HepG2 (cell line): ENCODE measurements at regions of chr3 and their contacts with region 1.

Region 1: DNA sequence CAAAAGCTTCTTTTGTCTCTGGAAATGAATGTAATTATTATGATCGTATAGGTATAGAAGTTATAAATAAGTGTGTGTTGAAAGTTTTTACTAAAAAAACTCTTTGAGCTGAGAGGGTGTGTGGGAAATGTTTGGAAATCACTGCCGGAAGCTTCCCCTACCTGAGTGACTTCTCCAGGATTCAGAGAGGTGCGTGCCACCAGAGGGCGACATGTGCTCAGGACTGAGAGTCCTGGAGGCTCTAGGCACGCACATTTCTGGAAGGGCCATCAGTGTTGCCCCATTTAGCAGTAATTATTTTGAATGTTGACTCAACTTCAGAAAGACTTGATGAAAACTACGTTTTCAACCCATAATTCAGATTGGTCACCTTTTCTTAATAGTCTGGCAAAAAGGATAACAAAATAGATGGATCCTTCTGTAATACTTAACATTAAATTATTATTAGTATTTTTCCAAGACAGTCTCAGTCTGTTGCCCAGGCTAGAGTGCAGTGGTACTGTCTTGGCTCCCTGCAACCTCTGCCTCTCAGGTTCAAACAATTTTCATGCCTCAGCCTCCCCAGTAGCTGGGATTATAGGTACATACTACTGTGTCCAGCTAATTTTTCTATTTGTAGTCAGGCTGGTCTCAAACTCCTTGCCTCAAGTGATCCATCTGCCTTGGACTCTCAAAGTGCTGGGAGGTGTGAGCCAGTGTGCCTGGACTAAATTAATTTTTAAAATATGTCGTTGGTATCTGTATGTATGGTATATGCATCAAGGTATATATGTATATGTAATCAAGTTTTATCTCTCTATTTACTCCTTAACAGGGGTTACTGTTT is 34.5 kb downstream of the GPR171 start:
- DNase-seq: peak; percentile 72
- ATAC-seq: peak; percentile 97
- H3K4me3 ChIP-seq: no peak overlapping the region
- H3K27ac ChIP-seq: no peak overlapping the region
- H3K4me1 ChIP-seq: peaks cover 32% of the 10 kb centered on the region
- H3K27me3 ChIP-seq: no peaks in the 10 kb centered on the region
- CTCF ChIP-seq: peak; percentile 94
- EP300 ChIP-seq: no peak
- POLR2A ChIP-seq: no peak
- RAD21 ChIP-seq: peak; percentile 95

Region 2: GRCh38 chr3:150984066-150984465 is 184.4 kb before region 1 on chr3:
- CTCF ChIA-PET with region 1: no interaction called
- POLR2A ChIA-PET with region 1: no interaction called
- in situ Hi-C with region 1: no loop called
- intact Hi-C with region 1: no loop called
- DNase-seq: no peak
- ATAC-seq: no peak
- H3K4me3 ChIP-seq: no peak overlapping the region
- H3K27ac ChIP-seq: no peak overlapping the region
- H3K4me1 ChIP-seq: no peaks in the 10 kb centered on the region
- H3K27me3 ChIP-seq: peaks cover 0 to 1% of the 10 kb centered on the region in 2 experiments; a peak in 1 of 5 replicates
- CTCF ChIP-seq: no peak
- EP300 ChIP-seq: no peak
- POLR2A ChIP-seq: no peak
- RAD21 ChIP-seq: no peak

Region 3: DNA sequence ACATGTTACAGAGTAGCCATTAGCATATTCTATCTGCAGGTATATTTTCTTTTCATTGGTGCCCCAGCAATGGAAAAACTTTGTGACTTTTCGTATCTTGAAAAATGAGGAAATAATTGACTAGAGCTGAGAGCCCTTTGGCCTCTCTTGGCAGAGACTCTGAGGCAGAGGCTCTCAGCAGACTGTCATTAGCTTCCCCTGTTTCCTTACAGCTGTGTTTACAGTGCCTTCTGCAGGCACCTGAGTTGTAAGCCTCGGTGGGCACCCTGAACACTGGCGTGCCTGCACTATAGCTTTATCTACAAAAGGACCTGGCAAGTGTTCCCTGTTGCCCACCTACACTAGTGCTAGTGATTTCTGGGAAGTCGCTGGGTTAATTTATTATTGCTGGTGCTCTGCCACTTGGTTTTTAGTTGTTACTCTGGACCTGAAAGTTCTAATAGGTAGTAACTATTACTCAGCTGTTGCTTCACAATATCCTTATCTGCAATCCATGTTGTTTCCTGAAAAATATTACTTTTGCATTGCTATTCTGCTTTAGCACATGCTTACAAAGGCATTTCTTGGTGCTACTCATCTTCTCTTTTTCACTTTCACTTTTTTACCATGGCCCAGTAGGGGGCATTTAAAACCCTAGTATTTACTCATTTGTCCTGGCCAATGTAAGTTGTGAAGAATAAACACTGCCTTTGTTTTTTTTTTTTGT is 42.3 kb after region 1 on chr3:
- CTCF ChIA-PET with region 1: interaction called, 7 read pairs
- POLR2A ChIA-PET with region 1: interaction called, 3 read pairs
- in situ Hi-C with region 1: no loop called
- intact Hi-C with region 1: loop called (anchors 5 kb)
- DNase-seq: peak; percentile 35
- ATAC-seq: peak; percentile 98
- H3K4me3 ChIP-seq: peak overlapping the region; percentile 5 to 48 (median 41); a peak in 5 of 6 replicates
- H3K27ac ChIP-seq: peak overlapping the region; percentile 53
- H3K4me1 ChIP-seq: peaks cover 23% of the 10 kb centered on the region
- H3K27me3 ChIP-seq: no peaks in the 10 kb centered on the region
- CTCF ChIP-seq: peak; percentile 71
- EP300 ChIP-seq: no peak
- POLR2A ChIP-seq: no peak
- RAD21 ChIP-seq: no peak; the same call in 1 of the 2 replicates

Region 4: GRCh38 chr3:151227807-151228665 is 59.6 kb after region 1 on chr3:
- CTCF ChIA-PET with region 1: interaction called, 29 read pairs
- POLR2A ChIA-PET with region 1: interaction called, 3 read pairs
- in situ Hi-C with region 1: loop called (anchors 5 kb)
- intact Hi-C with region 1: loop called (anchors 1 kb)
- DNase-seq: peak; percentile 67
- ATAC-seq: peak; percentile 94
- H3K4me3 ChIP-seq: no peak overlapping the region
- H3K27ac ChIP-seq: no peak overlapping the region
- H3K4me1 ChIP-seq: peaks cover 34% of the 10 kb centered on the region
- H3K27me3 ChIP-seq: no peaks in the 10 kb centered on the region; a peak in 1 of 5 replicates
- CTCF ChIP-seq: peak; percentile 92
- EP300 ChIP-seq: no peak
- POLR2A ChIP-seq: no peak
- RAD21 ChIP-seq: peak; percentile 93

Region 5: DNA sequence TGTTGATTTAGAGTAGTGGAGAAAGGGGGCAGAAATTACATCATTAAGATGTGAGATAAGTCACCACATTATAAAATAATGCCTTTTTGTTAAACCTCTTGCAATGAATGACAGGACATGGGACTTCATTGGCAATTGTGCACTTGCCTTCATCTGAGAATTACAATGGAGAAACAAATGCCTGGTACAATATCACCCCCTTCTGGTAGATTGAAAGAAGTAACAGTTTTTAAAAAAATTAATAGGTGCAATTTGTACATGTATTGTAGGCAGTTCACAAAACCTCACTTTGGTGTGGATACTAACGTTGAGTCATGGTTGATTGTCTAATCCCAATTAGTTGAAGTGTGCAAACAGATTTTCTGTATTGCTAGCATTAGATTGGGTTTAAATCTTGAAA is 114.4 kb after region 1 on chr3:
- CTCF ChIA-PET with region 1: interaction called, 130 read pairs
- POLR2A ChIA-PET with region 1: no interaction called
- in situ Hi-C with region 1: loop called (anchors 5 kb)
- intact Hi-C with region 1: loop called (anchors 1 kb)
- DNase-seq: peak; percentile 60
- ATAC-seq: peak; percentile 74
- H3K4me3 ChIP-seq: no peak overlapping the region
- H3K27ac ChIP-seq: no peak overlapping the region
- H3K4me1 ChIP-seq: peaks cover 23% of the 10 kb centered on the region
- H3K27me3 ChIP-seq: no peaks in the 10 kb centered on the region
- CTCF ChIP-seq: peak; percentile 76
- EP300 ChIP-seq: no peak
- POLR2A ChIP-seq: no peak
- RAD21 ChIP-seq: peak; percentile 85

Region 6: GRCh38 chr3:151327571-151328198 is 159.2 kb after region 1 on chr3:
- CTCF ChIA-PET with region 1: no interaction called
- POLR2A ChIA-PET with region 1: no interaction called
- in situ Hi-C with region 1: no loop called
- intact Hi-C with region 1: loop called (anchors 1 kb)
- DNase-seq: no peak
- ATAC-seq: peak; percentile 32; the same call in 1 of the 3 replicates
- H3K4me3 ChIP-seq: no peak overlapping the region
- H3K27ac ChIP-seq: no peak overlapping the region
- H3K4me1 ChIP-seq: no peaks in the 10 kb centered on the region
- H3K27me3 ChIP-seq: no peaks in the 10 kb centered on the region
- CTCF ChIP-seq: 0 out of 2 replicates have a peak, but pooled peaks have one; percentile 19
- EP300 ChIP-seq: no peak
- POLR2A ChIP-seq: no peak
- RAD21 ChIP-seq: no peak

Region 7: GRCh38 chr3:151918253-151919029 is 750.0 kb after region 1 on chr3:
- CTCF ChIA-PET with region 1: no interaction called
- POLR2A ChIA-PET with region 1: no interaction called
- in situ Hi-C with region 1: no loop called
- intact Hi-C with region 1: loop called (anchors 5 kb)
- DNase-seq: peak; percentile 34
- ATAC-seq: peak; percentile 54; the same call in 2 of the 3 replicates
- H3K4me3 ChIP-seq: no peak overlapping the region
- H3K27ac ChIP-seq: no peak overlapping the region
- H3K4me1 ChIP-seq: no peaks in the 10 kb centered on the region
- H3K27me3 ChIP-seq: no peaks in the 10 kb centered on the region
- CTCF ChIP-seq: peak; percentile 60
- EP300 ChIP-seq: no peak
- POLR2A ChIP-seq: no peak
- RAD21 ChIP-seq: no peak